ENCODE measurements at regions of chr11 and their contacts with region 1.

Region 1: DNA sequence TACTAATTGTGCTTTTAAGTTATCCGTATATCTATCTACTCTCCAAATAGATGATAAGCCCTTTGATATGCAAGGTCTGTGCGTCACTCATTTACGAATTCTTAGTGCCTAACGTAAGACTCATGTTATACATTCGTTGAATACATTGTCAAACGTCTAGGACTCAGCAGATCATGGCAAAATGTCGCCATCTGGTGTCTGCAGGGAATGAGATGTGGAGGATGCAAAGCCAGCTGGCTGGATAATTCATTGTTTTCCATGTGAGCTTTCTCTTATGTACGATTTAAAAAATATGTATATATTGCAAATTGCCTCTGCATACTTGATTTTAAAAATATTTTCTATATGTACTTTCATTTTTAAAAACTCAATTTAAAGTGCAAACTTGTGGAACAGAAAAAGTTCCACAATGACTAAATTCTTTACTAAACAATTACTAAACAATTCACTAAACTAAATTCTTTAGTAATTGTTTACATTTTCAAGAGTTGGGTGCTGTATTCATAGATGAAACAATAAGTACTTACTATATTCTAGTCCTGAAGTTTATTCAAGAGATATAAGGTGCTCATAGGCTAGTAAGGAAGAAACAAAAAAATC is 33.8 kb downstream of the ZNF202 start:
- DNase-seq: peak; percentile 82 to 85
- H3K4me3 ChIP-seq: no peak overlapping the region
- H3K4me3 Mint-ChIP-seq: no peak overlapping the region
- H3K27ac Mint-ChIP-seq: no peak overlapping the region
- H3K4me1 ChIP-seq: peaks cover 3% of the 10 kb centered on the region; the same call in 1 of the 2 replicates
- H3K4me1 Mint-ChIP-seq: peaks cover 6% of the 10 kb centered on the region
- H3K27me3 ChIP-seq: no peaks in the 10 kb centered on the region; the same call in 1 of the 2 replicates
- H3K27me3 Mint-ChIP-seq: peaks cover 12% of the 10 kb centered on the region
- CTCF ChIP-seq: peak; percentile 90 to 93

Region 2: DNA sequence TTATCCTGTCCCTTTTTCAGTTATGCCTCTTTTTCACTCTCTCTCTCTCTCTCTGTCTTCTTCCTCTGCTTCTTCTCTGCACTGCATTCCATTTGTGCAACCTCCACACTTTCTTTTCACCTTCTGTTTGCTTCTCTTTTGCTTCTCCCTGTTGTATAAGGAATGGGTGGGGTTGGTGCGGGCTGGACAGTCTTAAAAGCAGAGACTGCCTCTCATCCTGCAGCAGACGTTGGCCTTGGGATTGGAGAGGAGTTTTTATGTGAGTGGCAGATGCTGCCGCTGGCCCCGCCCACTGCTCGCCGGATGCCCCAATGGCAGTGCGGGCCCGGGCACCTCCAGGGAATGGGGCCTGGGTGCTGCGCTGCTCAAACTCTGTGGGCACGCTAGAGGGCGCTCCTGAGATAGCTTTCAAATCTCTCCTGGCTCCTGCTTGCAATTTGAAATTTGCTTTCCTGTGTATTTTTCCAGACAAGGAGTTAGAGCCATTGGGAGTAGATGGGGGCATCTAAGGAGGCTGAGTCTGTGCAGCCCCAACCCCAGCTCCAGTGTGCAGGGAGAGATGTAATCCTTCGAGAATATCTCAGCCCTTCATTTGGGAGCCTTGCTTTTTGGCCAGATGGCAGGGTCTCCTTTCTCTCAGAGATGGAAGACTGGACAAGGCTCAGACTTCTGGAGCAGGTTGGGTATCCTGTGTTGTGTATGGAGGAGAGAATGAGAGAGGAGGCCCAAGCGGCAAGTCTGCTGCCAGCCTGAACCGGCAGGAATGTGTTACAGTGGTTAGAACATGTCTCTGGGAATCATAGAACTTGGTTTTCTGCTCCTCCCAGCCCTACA is 196.5 kb before region 1 on chr11:
- CTCF ChIA-PET with region 1: interaction called, 8 read pairs
- POLR2A ChIA-PET with region 1: no interaction called
- intact Hi-C with region 1: loop called (anchors 1 kb)
- DNase-seq: peak; percentile 89
- H3K4me3 ChIP-seq: no peak overlapping the region
- H3K4me3 Mint-ChIP-seq: no peak overlapping the region
- H3K27ac Mint-ChIP-seq: no peak overlapping the region
- H3K4me1 ChIP-seq: no peaks in the 10 kb centered on the region
- H3K4me1 Mint-ChIP-seq: no peaks in the 10 kb centered on the region
- H3K27me3 ChIP-seq: no peaks in the 10 kb centered on the region; the same call in 1 of the 2 replicates
- H3K27me3 Mint-ChIP-seq: peaks cover 19% of the 10 kb centered on the region
- CTCF ChIP-seq: peak; percentile 96 to 97

Region 3: GRCh38 chr11:123640677-123641494 is 66.8 kb before region 1 on chr11:
- CTCF ChIA-PET with region 1: interaction called, 22 read pairs
- POLR2A ChIA-PET with region 1: no interaction called
- intact Hi-C with region 1: loop called (anchors 1 kb)
- DNase-seq: peak; percentile 62 to 69
- H3K4me3 ChIP-seq: no peak overlapping the region
- H3K4me3 Mint-ChIP-seq: no peak overlapping the region
- H3K27ac Mint-ChIP-seq: no peak overlapping the region
- H3K4me1 ChIP-seq: no peaks in the 10 kb centered on the region
- H3K4me1 Mint-ChIP-seq: no peaks in the 10 kb centered on the region
- H3K27me3 ChIP-seq: peaks cover 2% of the 10 kb centered on the region; the same call in 1 of the 2 replicates
- H3K27me3 Mint-ChIP-seq: peaks cover 37% of the 10 kb centered on the region
- CTCF ChIP-seq: peak; percentile 95 to 98

Region 4: DNA sequence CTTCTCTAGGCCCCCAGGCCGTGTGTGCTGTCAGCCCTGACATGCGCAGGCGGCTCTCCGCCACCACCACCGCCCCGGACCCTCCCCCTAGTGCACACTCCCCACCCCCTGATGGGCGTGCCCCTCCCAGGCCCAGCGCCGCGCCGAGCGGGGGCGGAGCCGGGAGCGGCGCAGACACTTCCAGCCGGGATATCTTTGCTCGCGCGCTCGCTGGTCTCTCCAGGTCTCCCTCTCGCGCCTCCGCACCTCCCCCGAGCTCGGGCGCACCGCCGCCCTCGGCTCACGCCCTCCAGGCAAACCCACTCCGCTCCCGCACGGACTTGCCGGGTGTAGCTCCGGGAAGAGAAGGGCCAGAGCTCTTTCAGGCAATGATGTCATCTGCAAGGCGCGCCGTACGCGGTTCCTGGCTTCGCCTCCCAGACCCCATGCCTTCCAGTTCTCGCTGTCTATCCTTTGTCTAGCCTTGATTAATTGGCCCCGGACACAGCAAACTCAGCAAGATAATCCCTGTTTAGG is 53.1 kb before region 1 on chr11 and contains the start of gene SCN3B:
- CTCF ChIA-PET with region 1: interaction called, 21 read pairs
- POLR2A ChIA-PET with region 1: no interaction called
- intact Hi-C with region 1: loop called (anchors 1 kb)
- DNase-seq: peak; percentile 90 to 92
- H3K4me3 ChIP-seq: peak within 1 kb of the TSS; percentile 61
- H3K4me3 Mint-ChIP-seq: peak within 1 kb of the TSS; percentile 66
- H3K27ac Mint-ChIP-seq: no peak within 1 kb of the TSS
- H3K4me1 ChIP-seq: no peaks in the 10 kb centered on the region; the same call in 1 of the 2 replicates
- H3K4me1 Mint-ChIP-seq: no peaks in the 10 kb centered on the region
- H3K27me3 ChIP-seq: 0 out of 2 replicates have a peak, but pooled peaks cover 1% of the 10 kb centered on the region
- H3K27me3 Mint-ChIP-seq: peaks cover 35% of the 10 kb centered on the region
- CTCF ChIP-seq: no peak
- total RNA-seq, gene SCN3B: 0.77 and 0.82 TPM in 2 replicates

Region 5: GRCh38 chr11:123672568-123672967 is 35.1 kb before region 1 on chr11:
- CTCF ChIA-PET with region 1: no interaction called
- POLR2A ChIA-PET with region 1: no interaction called
- intact Hi-C with region 1: no loop called
- DNase-seq: no peak
- H3K4me3 ChIP-seq: no peak overlapping the region
- H3K4me3 Mint-ChIP-seq: no peak overlapping the region
- H3K27ac Mint-ChIP-seq: no peak overlapping the region
- H3K4me1 ChIP-seq: no peaks in the 10 kb centered on the region
- H3K4me1 Mint-ChIP-seq: no peaks in the 10 kb centered on the region
- H3K27me3 ChIP-seq: peaks cover 2% of the 10 kb centered on the region; the same call in 1 of the 2 replicates
- H3K27me3 Mint-ChIP-seq: peaks cover 9% of the 10 kb centered on the region
- CTCF ChIP-seq: no peak

Region 6: GRCh38 chr11:123696183-123696582 is 11.5 kb before region 1 on chr11:
- CTCF ChIA-PET with region 1: interaction called, 10 read pairs
- POLR2A ChIA-PET with region 1: no interaction called
- intact Hi-C with region 1: no loop called
- DNase-seq: no peak
- H3K4me3 ChIP-seq: no peak overlapping the region
- H3K4me3 Mint-ChIP-seq: no peak overlapping the region
- H3K27ac Mint-ChIP-seq: no peak overlapping the region
- H3K4me1 ChIP-seq: no peaks in the 10 kb centered on the region
- H3K4me1 Mint-ChIP-seq: no peaks in the 10 kb centered on the region
- H3K27me3 ChIP-seq: 0 out of 2 replicates have a peak, but pooled peaks cover 1% of the 10 kb centered on the region
- H3K27me3 Mint-ChIP-seq: peaks cover 27% of the 10 kb centered on the region
- CTCF ChIP-seq: peak in 1 of 2 experiments; percentile 14

Region 7: DNA sequence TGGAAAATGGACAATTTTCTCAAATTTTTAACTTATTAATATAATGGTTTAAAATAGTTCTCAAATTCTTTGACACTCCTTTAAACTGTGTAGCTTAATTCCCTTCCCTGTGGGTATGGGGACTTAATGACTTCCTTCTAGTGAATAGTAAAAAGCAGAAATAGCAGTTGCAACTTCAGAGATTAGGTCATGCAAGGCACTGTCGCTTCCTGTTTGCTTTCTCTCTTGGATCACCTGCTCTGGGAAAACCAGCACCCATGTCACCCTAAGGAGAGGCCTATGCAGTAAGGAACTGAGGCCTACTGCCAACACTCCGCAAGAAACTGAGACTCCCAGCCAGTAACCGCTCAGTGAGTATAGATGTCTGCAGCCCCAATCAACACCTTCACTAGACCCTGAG is 898.0 kb after region 1 on chr11:
- CTCF ChIA-PET with region 1: no interaction called
- POLR2A ChIA-PET with region 1: no interaction called
- intact Hi-C with region 1: no loop called
- DNase-seq: no peak
- H3K4me3 ChIP-seq: no peak overlapping the region
- H3K4me3 Mint-ChIP-seq: no peak overlapping the region
- H3K27ac Mint-ChIP-seq: no peak overlapping the region
- H3K4me1 ChIP-seq: no peaks in the 10 kb centered on the region
- H3K4me1 Mint-ChIP-seq: peaks cover 7% of the 10 kb centered on the region
- H3K27me3 ChIP-seq: no peaks in the 10 kb centered on the region
- H3K27me3 Mint-ChIP-seq: peaks cover 12% of the 10 kb centered on the region
- CTCF ChIP-seq: no peak

Measured in Caco-2 (cell line).